ENCODE measurements at regions of chrX and their contacts with region 1.

Region 1: GRCh38 chrX:129931411-129932015 is 25.5 kb downstream of the UTP14A start:
- DNase-seq: peak; percentile 63
- H3K4me3 Mint-ChIP-seq: peak overlapping the region; percentile 85
- H3K27ac Mint-ChIP-seq: peak overlapping the region; percentile 84
- H3K4me1 Mint-ChIP-seq: peaks cover 3% of the 10 kb centered on the region
- H3K27me3 Mint-ChIP-seq: peaks cover 12% of the 10 kb centered on the region

Region 2: DNA sequence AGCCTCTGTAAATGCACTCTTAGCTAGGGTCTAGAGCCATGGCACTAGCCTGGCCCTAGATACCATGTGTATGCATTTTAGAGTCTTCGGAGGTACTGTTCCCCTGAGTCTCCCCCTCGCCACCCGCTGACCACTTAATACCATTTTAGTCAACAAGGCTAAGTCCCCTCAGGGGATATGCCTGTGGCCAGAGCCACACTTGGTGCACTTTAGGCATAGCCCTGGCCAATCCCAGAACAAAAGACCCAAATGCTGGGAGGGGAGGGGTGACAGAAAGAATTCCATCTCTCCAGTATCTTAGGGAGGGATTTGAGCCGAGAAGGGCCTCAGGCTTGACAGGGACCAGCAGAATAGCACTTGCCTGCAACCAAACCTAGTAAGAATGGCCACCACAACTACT is 22.4 kb after region 1 on chrX:
- intact Hi-C with region 1: loop called (anchors 2 kb)
- DNase-seq: no peak
- H3K4me3 Mint-ChIP-seq: no peak overlapping the region
- H3K27ac Mint-ChIP-seq: no peak overlapping the region
- H3K4me1 Mint-ChIP-seq: peaks cover 16% of the 10 kb centered on the region
- H3K27me3 Mint-ChIP-seq: peaks cover 6% of the 10 kb centered on the region

Region 3: GRCh38 chrX:130060122-130061069 is 128.9 kb after region 1 on chrX:
- intact Hi-C with region 1: loop called (anchors 2 kb)
- DNase-seq: peak; percentile 73
- H3K4me3 Mint-ChIP-seq: peak overlapping the region; percentile 76
- H3K27ac Mint-ChIP-seq: peak overlapping the region; percentile 80
- H3K4me1 Mint-ChIP-seq: peaks cover 3% of the 10 kb centered on the region
- H3K27me3 Mint-ChIP-seq: no peaks in the 10 kb centered on the region